PC-3 (cell line): ENCODE measurements at regions of chr17 and their contacts with region 1.

Region 1: GRCh38 chr17:33779225-33779591 is 475.9 kb upstream of the CCL2 start:
- DNase-seq: peak; percentile 49
- ATAC-seq: no peak
- H3K4me3 ChIP-seq: no peak overlapping the region
- H3K27ac ChIP-seq: no peak overlapping the region
- H3K4me1 ChIP-seq: no peaks in the 10 kb centered on the region
- H3K27me3 ChIP-seq: no peaks in the 10 kb centered on the region
- CTCF ChIP-seq: peak; percentile 82

Region 2: DNA sequence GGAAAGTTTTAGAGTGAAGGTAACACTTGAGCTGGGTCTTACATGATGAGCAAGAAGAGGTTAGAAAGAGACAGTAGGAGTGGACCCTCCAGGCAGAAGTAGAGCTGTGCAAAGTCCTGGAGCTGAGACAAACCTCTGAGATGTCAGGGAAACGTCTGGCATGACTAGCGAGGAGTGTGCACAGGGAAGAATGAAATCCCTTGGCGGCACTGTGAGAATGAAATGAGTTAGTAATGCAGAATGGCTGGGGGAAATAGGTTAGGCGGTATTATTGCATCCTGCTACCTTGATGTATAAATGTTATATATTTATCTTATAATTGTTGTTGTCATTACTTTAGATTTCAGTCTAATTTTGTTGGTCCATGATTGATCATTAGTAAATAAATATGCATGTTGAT is 18.0 kb after region 1 on chr17:
- CTCF ChIA-PET with region 1: no interaction called
- POLR2A ChIA-PET with region 1: no interaction called
- intact Hi-C with region 1: no loop called
- DNase-seq: no peak
- ATAC-seq: no peak
- H3K4me3 ChIP-seq: no peak overlapping the region
- H3K27ac ChIP-seq: no peak overlapping the region
- H3K4me1 ChIP-seq: no peaks in the 10 kb centered on the region
- H3K27me3 ChIP-seq: no peaks in the 10 kb centered on the region
- CTCF ChIP-seq: no peak

Region 3: GRCh38 chr17:34146440-34147043 is 367.3 kb after region 1 on chr17:
- CTCF ChIA-PET with region 1: no interaction called
- POLR2A ChIA-PET with region 1: no interaction called
- intact Hi-C with region 1: loop called (anchors 5 kb)
- DNase-seq: peak; percentile 30
- ATAC-seq: no peak; the same call in 1 of the 2 replicates
- H3K4me3 ChIP-seq: no peak overlapping the region
- H3K27ac ChIP-seq: no peak overlapping the region
- H3K4me1 ChIP-seq: no peaks in the 10 kb centered on the region
- H3K27me3 ChIP-seq: no peaks in the 10 kb centered on the region
- CTCF ChIP-seq: peak; percentile 45